ENCODE measurements at regions of chr1 and their contacts with region 1.

Region 1: DNA sequence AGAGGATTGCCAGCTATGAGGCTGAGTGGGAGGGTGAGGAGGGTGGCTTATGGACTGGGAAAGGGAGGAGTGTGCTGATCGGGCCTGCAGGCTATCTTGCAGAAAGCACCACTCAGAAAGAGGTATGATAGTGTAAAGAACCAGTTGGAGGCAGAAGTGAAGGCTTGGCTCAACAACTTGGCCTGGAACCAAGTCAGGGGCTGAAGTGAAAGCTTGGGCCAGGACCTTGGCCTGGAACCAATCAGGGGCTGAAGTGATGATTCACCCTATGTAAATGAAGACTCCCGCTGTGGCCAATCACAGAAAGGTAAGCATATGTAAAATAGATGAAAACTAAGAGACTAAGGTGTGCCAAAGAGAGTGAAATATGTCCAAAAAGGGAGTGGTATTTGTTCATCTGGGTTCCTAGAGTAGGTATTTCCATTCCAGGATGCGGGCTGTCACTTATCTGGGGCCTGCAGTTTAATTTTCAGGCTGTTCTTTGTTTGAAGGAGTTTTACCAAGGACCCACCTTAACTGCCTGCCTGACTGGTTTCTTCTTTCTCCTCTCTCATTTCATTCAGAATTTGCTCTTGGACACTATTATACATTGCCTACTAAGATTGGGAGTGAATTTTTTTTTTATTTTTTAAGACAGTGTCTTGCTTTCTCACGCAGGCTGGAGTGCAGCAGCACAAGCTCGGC is 5.1 kb upstream of the RFX5 start:
- DNase-seq: peak in 2 of 3 donors; percentile 17 to 26
- H3K4me3 ChIP-seq: no peak overlapping the region
- H3K27ac ChIP-seq: no peak overlapping the region
- H3K4me1 ChIP-seq: peaks cover 6 to 9% (median 8%) of the 10 kb centered on the region in 4 experiments
- H3K27me3 ChIP-seq: no peaks in the 10 kb centered on the region

Region 2: DNA sequence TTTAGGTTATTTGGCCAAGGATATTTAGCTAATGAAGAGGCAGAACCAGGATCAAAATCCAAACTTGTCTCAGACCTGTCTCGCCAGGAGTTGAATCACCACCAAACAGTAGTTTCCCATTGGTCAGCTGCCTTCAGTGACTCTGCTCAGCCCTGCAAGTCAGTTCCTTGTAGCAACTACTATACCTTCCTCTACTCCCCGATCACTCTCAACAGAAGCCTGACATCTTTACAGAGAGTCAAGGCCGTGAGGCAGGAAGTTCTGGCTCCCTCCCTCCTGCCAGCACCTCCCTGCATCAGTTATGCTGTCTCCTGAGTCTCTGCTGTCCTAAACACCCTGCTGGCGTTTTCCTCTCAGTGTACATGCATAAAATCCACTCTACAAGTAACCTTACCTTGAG is 84.4 kb before region 1 on chr1:
- CTCF ChIA-PET with region 1: no interaction called
- POLR2A ChIA-PET with region 1: no interaction called
- DNase-seq: no peak
- H3K4me3 ChIP-seq: no peak overlapping the region
- H3K27ac ChIP-seq: no peak overlapping the region
- H3K4me1 ChIP-seq: no peaks in the 10 kb centered on the region
- H3K27me3 ChIP-seq: no peaks in the 10 kb centered on the region

Region 3: GRCh38 chr1:151370211-151370911 is 18.2 kb after region 1 on chr1:
- CTCF ChIA-PET with region 1: interaction called, 39 read pairs
- POLR2A ChIA-PET with region 1: interaction called, 4 read pairs
- DNase-seq: peak; percentile 45 to 83 (median 68)
- H3K4me3 ChIP-seq: no peak overlapping the region
- H3K27ac ChIP-seq: peak overlapping the region in 1 of 2 experiments; percentile 3
- H3K4me1 ChIP-seq: peaks cover 0 to 27% (median 20%) of the 10 kb centered on the region in 4 experiments
- H3K27me3 ChIP-seq: no peaks in the 10 kb centered on the region